Activated CD4-positive, alpha-beta T cell treated with anti-CD3 and anti-CD28 coated beads, Interleukin-2, amount 10 ng/mL, durations not matched to agents 24 days and 14 days (primary cell): ENCODE measurements at regions of chr9 and their contacts with region 1.

Region 1: GRCh38 chr9:132006677-132007370 is 72.8 kb downstream of the MED27 start:
- DNase-seq: peak; percentile 80
- H3K4me3 Mint-ChIP-seq: peak overlapping the region; percentile 37
- H3K27ac Mint-ChIP-seq: peak overlapping the region; percentile 38
- H3K4me1 Mint-ChIP-seq: peaks cover 47% of the 10 kb centered on the region
- H3K27me3 Mint-ChIP-seq: peaks cover 2% of the 10 kb centered on the region

Region 2: GRCh38 chr9:131839281-131840084 is 167.3 kb before region 1 on chr9:
- intact Hi-C with region 1: loop called (anchors 10 kb)
- DNase-seq: peak; percentile 92
- H3K4me3 Mint-ChIP-seq: peak overlapping the region; percentile 72
- H3K27ac Mint-ChIP-seq: peak overlapping the region; percentile 99
- H3K4me1 Mint-ChIP-seq: peaks cover 20% of the 10 kb centered on the region
- H3K27me3 Mint-ChIP-seq: no peaks in the 10 kb centered on the region

Region 3: GRCh38 chr9:132160802-132161742 is 154.2 kb after region 1 on chr9:
- intact Hi-C with region 1: loop called (anchors 5 kb)
- DNase-seq: peak; percentile 90
- H3K4me3 Mint-ChIP-seq: peak overlapping the region; percentile 88
- H3K27ac Mint-ChIP-seq: peak overlapping the region; percentile 77
- H3K4me1 Mint-ChIP-seq: peaks cover 10% of the 10 kb centered on the region
- H3K27me3 Mint-ChIP-seq: peaks cover 60% of the 10 kb centered on the region